Ascending aorta (tissue), 2 donors: ENCODE measurements at regions of chr1 and their contacts with region 1.

Region 1: GRCh38 chr1:236673289-236673919 is 12.9 kb upstream of the ACTN2 start:
- DNase-seq: no peak
- H3K4me3 ChIP-seq: peak overlapping the region; percentile 26 to 34
- H3K27ac ChIP-seq: peak overlapping the region; percentile 65 to 68
- H3K4me1 ChIP-seq: peaks cover 0 to 11% of the 10 kb centered on the region in 2 donors
- H3K27me3 ChIP-seq: no peaks in the 10 kb centered on the region
- CTCF ChIP-seq: no peak

Region 2: DNA sequence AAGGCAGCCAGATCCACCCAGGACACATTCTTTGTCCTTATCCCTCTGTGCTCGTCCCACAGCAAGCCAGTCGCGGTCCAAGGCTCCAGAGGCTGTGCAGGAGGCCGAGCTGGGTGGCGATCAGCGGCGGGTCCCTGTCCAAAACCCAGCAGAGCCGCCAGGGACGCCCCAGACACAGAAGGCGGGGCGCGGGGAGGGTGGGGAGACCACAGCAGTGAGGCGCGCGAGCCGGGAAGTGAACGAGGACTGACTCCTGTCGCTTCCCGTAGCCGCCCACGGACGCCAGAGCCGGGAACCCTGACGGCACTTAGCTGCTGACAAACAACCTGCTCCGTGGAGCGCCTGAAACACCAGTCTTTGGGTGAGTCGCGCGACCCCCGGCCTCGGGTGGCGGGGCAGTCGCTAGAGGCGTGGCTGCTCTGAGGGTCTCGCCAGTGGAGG is 149.7 kb before region 1 on chr1 and contains the start of gene LGALS8:
- intact Hi-C with region 1: loop called (anchors 5 kb)
- DNase-seq: peak; percentile 72 to 95
- H3K4me3 ChIP-seq: peak within 1 kb of the TSS; percentile 68 to 78
- H3K27ac ChIP-seq: peak within 1 kb of the TSS; percentile 77 to 88
- H3K4me1 ChIP-seq: peaks cover 0 to 6% of the 10 kb centered on the region in 2 donors
- H3K27me3 ChIP-seq: no peaks in the 10 kb centered on the region
- CTCF ChIP-seq: no peak
- total RNA-seq, gene LGALS8: 45.8 TPM

Region 3: DNA sequence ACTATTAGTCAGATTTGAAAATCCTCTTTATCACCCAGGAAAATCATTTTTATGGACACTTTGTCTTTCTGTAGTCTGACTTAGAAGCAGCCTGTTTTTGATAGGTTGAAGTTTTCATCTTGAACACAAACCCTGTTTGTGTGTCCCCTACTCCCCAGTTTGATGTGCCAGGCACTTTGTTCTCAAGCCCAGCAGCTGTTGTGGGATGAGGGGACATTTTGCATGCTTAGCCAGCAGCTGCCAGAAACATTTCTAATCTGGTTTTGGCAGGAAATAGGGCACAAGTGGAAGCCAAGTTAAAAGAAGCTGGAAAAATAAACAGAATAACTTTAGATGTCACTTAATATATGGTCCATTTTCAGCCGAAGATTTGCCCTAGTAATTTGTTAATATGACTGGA is 42.8 kb after region 1 on chr1:
- intact Hi-C with region 1: loop called (anchors 1 kb)
- DNase-seq: no peak
- H3K4me3 ChIP-seq: no peak overlapping the region
- H3K27ac ChIP-seq: peak overlapping the region; percentile 41 to 48
- H3K4me1 ChIP-seq: peaks cover 3 to 20% of the 10 kb centered on the region in 2 donors
- H3K27me3 ChIP-seq: no peaks in the 10 kb centered on the region
- CTCF ChIP-seq: no peak